ENCODE measurements at regions of chr14 and their contacts with region 1.

Region 1: GRCh38 chr14:20494935-20495766 is 10.2 kb upstream of the RNASE10 start:
- DNase-seq: no peak
- ATAC-seq: no peak
- H3K4me3 ChIP-seq: no peak overlapping the region
- H3K4me3 Mint-ChIP-seq: no peak overlapping the region
- H3K27ac ChIP-seq: no peak overlapping the region
- H3K27ac Mint-ChIP-seq: no peak overlapping the region
- H3K4me1 ChIP-seq: peaks cover 46 to 52% of the 10 kb centered on the region in 2 donors
- H3K4me1 Mint-ChIP-seq: peaks cover 66% of the 10 kb centered on the region
- H3K27me3 ChIP-seq: no peaks in the 10 kb centered on the region
- H3K27me3 Mint-ChIP-seq: no peaks in the 10 kb centered on the region
- CTCF ChIP-seq: no peak

Region 2: GRCh38 chr14:20530771-20531571 is 35.8 kb after region 1 on chr14:
- CTCF ChIA-PET with region 1: interaction called, 12 read pairs
- POLR2A ChIA-PET with region 1: no interaction called
- intact Hi-C with region 1: loop called (anchors 5 kb)
- DNase-seq: peak; percentile 78
- ATAC-seq: peak; percentile 65
- H3K4me3 ChIP-seq: no peak overlapping the region
- H3K4me3 Mint-ChIP-seq: no peak overlapping the region
- H3K27ac ChIP-seq: no peak overlapping the region
- H3K27ac Mint-ChIP-seq: peak overlapping the region; percentile 42
- H3K4me1 ChIP-seq: peaks cover 0 to 4% of the 10 kb centered on the region in 2 donors
- H3K4me1 Mint-ChIP-seq: peaks cover 9% of the 10 kb centered on the region
- H3K27me3 ChIP-seq: no peaks in the 10 kb centered on the region
- H3K27me3 Mint-ChIP-seq: peaks cover 9% of the 10 kb centered on the region
- CTCF ChIP-seq: peak; percentile 83

Measured in B cell (primary cell).